Heart left ventricle (tissue), 16 donors: ENCODE measurements at regions of chr11 and their contacts with region 1.

Region 1: DNA sequence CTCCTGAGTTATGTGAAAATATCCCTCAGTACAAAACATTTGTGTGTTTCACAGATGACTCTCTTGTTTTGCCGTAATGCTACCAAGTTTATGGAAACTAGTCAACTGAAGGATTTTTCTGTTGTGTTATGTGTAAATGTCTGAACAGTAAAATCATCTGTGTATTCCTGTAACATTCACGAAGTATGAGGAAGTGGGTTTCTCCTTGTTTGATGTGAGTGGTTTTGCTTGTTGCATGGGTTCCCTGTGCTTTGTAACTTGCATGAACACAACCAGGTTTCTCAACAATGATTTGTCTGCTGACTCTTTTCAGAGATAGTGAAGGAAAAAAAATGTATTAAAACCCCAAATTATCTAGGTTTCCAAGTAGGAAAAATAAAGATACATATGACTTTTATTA is 138.1 kb downstream of the PGR start:
- DNase-seq: no peak
- ATAC-seq: no peak
- H3K4me3 ChIP-seq: no peak overlapping the region
- H3K27ac ChIP-seq: no peak overlapping the region
- H3K4me1 ChIP-seq: peaks cover 0 to 10% (median 2%) of the 10 kb centered on the region in 12 donors
- H3K27me3 ChIP-seq: no peaks in the 10 kb centered on the region
- CTCF ChIP-seq: no peak
- POLR2A ChIP-seq: no peak

Region 2: DNA sequence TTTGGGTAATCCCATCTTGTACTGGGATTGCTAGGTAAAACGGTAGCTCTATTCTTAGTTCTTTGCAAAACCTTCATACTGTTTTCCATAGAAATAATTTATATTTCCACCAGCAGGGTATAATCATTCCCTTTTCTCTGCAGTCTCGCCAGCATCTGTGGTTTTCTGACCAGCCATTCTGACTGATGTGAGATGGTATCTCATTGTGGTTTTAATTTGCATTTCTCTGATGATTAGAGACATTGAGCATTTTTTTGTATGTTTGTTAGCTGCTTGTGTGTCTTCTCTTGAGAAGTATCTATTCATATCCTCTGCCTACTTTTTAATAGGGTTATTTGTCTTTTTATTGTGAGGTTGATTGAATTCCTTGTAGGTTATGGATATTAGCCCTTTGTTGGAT is 82.8 kb before region 1 on chr11:
- intact Hi-C with region 1: no loop called
- DNase-seq: no peak
- ATAC-seq: no peak
- H3K4me3 ChIP-seq: no peak overlapping the region
- H3K27ac ChIP-seq: no peak overlapping the region
- H3K4me1 ChIP-seq: no peaks in the 10 kb centered on the region
- H3K27me3 ChIP-seq: no peaks in the 10 kb centered on the region
- CTCF ChIP-seq: no peak
- POLR2A ChIP-seq: no peak

Region 3: DNA sequence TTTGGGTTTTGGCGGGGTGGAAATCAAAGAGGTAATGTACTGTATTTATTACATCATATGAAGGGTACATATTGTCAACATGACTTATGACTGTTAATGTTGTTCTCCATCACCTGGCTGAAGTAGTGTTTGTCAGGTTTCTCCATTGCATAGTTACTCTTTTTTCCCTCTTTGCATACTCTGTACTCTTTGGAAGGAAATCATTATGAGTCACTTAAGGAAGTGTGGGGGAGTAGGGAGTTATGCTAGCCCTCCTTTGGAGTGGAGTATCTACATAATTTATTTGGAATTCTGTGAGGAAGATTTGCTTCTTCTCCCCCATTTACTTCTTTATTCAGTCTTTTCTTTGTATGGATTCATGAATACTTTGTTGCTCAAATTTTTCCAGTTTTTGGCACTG is 141.6 kb after region 1 on chr11:
- intact Hi-C with region 1: loop called in 2 of 10 experiments (anchors 10 kb)
- DNase-seq: no peak
- ATAC-seq: no peak
- H3K4me3 ChIP-seq: no peak overlapping the region
- H3K27ac ChIP-seq: no peak overlapping the region
- H3K4me1 ChIP-seq: peaks cover 0 to 14% (median 1%) of the 10 kb centered on the region in 12 donors
- H3K27me3 ChIP-seq: peaks cover 0 to 21% (median 0%) of the 10 kb centered on the region in 9 donors
- CTCF ChIP-seq: no peak
- POLR2A ChIP-seq: no peak